CD14-positive monocyte (primary cell): ENCODE measurements at regions of chr2 and their contacts with region 1.

Region 1: GRCh38 chr2:108637304-108637669 is 82.0 kb upstream of the RANBP2 start:
- DNase-seq: peak; percentile 93 to 98 (median 98)
- H3K4me3 ChIP-seq: no peak overlapping the region
- H3K4me3 Mint-ChIP-seq: peak overlapping the region in 1 of 2 donors; percentile 62
- H3K27ac ChIP-seq: peak overlapping the region; percentile 81 to 91
- H3K27ac Mint-ChIP-seq: peak overlapping the region; percentile 93 to 99 (median 98)
- H3K4me1 ChIP-seq: peaks cover 38 to 44% of the 10 kb centered on the region in 2 donors
- H3K4me1 Mint-ChIP-seq: peaks cover 68% of the 10 kb centered on the region
- H3K27me3 ChIP-seq: no peaks in the 10 kb centered on the region
- H3K27me3 Mint-ChIP-seq: no peaks in the 10 kb centered on the region
- CTCF ChIP-seq: no peak

Region 2: DNA sequence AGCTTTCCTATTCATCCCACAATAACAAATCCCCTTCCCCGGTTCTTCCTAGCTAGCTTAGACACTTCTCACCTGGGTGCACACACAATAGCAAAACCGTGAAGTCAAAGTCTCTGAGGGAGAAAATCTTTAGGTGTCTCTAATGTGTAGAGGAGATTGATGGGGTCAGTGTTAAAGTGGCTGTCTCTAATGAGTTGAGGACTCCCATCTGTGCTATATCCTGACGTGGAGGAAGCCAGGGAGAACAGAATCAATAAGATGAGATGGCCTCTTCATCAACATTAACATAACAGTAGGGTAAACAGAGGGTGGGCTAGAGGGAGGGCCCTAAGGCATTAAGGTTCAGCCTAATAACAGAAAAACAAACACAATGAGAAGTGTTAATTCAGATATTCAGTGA is 530.6 kb before region 1 on chr2:
- intact Hi-C with region 1: no loop called
- DNase-seq: no peak
- H3K4me3 ChIP-seq: no peak overlapping the region
- H3K4me3 Mint-ChIP-seq: no peak overlapping the region
- H3K27ac ChIP-seq: no peak overlapping the region
- H3K27ac Mint-ChIP-seq: no peak overlapping the region
- H3K4me1 ChIP-seq: no peaks in the 10 kb centered on the region
- H3K4me1 Mint-ChIP-seq: no peaks in the 10 kb centered on the region
- H3K27me3 ChIP-seq: no peaks in the 10 kb centered on the region
- H3K27me3 Mint-ChIP-seq: peaks cover 0 to 3% (median 2%) of the 10 kb centered on the region in 3 donors
- CTCF ChIP-seq: no peak

Region 3: GRCh38 chr2:108348816-108349570 is 288.3 kb before region 1 on chr2:
- intact Hi-C with region 1: no loop called
- DNase-seq: no peak
- H3K4me3 ChIP-seq: no peak overlapping the region
- H3K4me3 Mint-ChIP-seq: no peak overlapping the region
- H3K27ac ChIP-seq: no peak overlapping the region
- H3K27ac Mint-ChIP-seq: no peak overlapping the region
- H3K4me1 ChIP-seq: no peaks in the 10 kb centered on the region
- H3K4me1 Mint-ChIP-seq: peaks cover 11% of the 10 kb centered on the region
- H3K27me3 ChIP-seq: no peaks in the 10 kb centered on the region
- H3K27me3 Mint-ChIP-seq: peaks cover 0 to 2% (median 1%) of the 10 kb centered on the region in 3 donors
- CTCF ChIP-seq: no peak

Region 4: DNA sequence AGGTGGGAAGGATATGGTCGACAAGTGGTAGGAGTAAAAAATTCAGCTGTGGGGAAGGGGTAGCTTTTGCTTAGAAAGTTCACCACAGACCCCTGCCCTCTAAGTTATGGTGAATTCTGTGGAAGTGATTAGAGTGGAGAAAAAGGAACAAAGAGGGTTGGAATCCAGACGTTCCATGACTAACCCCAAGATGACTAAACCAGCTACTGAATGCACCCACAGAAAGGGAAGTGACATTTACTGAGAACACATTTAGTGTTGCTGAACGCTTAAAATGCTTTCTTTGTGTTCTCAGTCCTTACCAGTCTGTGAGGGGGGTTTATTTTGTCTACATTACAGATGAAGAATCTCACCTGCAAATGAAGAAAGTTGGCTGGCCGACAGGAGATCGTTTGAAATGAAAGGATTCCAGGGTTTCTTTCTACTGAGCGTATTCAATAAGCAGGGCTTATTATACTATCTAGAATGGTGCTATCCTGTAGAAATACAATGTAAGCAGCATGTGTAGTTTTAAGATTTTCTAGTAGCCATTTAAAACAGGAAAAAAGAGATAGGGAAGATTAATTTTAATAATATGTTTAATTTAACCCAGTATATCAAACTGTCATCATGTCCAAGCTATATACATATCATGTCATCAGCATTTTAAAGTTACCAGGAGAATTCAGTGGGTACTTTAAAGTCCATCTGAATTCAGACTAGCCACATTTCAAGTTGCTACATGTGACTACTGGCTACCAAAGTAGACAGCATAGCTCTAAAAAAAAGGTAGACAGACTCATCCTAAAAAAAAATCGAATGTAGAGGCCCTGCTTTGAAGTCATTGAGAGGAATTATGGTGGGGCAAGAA is 42.9 kb before region 1 on chr2:
- intact Hi-C with region 1: loop called (anchors 2 to 5 kb)
- DNase-seq: peak; percentile 91 to 97 (median 95)
- H3K4me3 ChIP-seq: peak overlapping the region in 2 of 3 experiments; percentile 16 to 34
- H3K4me3 Mint-ChIP-seq: peak overlapping the region; percentile 52 to 82
- H3K27ac ChIP-seq: peak overlapping the region; percentile 70 to 99
- H3K27ac Mint-ChIP-seq: peak overlapping the region; percentile 95 to 100 (median 96)
- H3K4me1 ChIP-seq: peaks cover 72 to 79% of the 10 kb centered on the region in 2 donors
- H3K4me1 Mint-ChIP-seq: peaks cover 78% of the 10 kb centered on the region
- H3K27me3 ChIP-seq: no peaks in the 10 kb centered on the region
- H3K27me3 Mint-ChIP-seq: no peaks in the 10 kb centered on the region
- CTCF ChIP-seq: no peak

Region 5: GRCh38 chr2:108691447-108691846 is 54.2 kb after region 1 on chr2:
- intact Hi-C with region 1: no loop called
- DNase-seq: no peak
- H3K4me3 ChIP-seq: no peak overlapping the region
- H3K4me3 Mint-ChIP-seq: no peak overlapping the region
- H3K27ac ChIP-seq: no peak overlapping the region
- H3K27ac Mint-ChIP-seq: no peak overlapping the region
- H3K4me1 ChIP-seq: no peaks in the 10 kb centered on the region
- H3K4me1 Mint-ChIP-seq: no peaks in the 10 kb centered on the region
- H3K27me3 ChIP-seq: no peaks in the 10 kb centered on the region
- H3K27me3 Mint-ChIP-seq: peaks cover 0 to 2% (median 0%) of the 10 kb centered on the region in 3 donors
- CTCF ChIP-seq: no peak